Posterior cingulate gyrus (tissue), 11 donors: ENCODE measurements at regions of chr22 and their contacts with region 1.

Region 1: DNA sequence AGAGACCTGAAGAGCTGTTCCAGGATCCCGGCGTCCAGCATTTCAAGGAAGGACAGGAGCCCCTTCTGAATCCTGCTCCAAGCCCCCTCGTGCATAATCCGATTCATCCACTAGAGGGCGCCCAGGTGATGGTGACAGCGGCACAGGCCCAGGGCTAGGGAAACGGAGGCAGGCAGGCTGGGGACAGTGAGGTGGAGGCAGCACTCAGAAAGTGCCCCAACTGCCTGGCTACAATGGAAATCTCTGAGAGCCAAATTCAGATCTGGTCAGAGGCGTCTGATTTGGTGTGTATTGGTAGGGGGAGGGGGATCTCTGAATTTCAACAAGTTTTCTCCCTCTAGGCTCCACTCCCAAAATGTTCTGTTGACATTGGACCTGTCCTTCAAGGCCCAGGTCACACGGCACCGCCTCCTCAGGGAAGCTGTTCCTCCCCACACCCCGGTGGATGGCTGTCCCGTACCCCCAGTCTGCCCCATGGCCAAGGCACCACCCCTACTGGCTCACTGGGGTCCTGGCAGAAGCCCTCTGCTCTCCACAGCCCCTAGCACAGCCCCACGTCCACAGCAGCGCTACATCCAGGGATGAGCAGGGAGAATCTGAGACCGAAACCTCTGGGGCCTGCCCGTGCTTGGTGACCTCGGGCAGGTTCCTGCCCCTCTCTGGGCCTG is 142.9 kb downstream of the CRYBB2 start:
- DNase-seq: peak; percentile 25 to 94 (median 74)

Region 2: DNA sequence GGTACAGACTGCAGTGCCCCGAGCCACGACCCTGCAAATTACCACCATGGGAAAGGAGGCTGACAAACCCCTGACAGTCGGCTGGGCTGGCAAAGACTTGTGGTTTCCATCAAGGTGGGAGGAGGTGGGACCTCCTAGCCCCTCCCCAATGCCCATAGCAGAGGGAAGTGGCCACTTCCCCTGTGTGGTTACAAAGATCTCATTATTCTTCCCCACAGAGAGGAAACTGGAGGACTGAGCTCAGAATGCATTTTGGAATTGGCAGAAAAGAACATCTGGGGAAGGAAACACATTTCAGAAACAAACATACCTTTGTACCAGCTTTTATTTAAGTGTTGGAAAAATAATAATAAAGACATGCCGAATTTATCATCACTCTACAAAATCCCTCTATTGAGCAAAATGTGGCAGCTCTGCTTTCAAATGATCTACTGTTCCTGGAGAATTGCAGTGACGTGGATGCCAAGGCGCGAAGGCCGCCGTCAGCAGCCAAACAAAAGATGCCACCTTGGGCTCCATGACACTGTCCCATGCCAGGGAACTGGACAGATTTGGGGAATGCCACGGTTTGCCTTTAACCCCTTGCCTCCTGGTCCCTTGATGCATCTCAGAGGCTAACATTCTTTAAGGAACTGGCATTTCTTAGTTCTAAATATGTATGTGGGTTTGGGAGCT is 26.7 kb after region 1 on chr22:
- intact Hi-C with region 1: no loop called
- DNase-seq: peak in 1 of 10 donors; percentile 61

Region 3: DNA sequence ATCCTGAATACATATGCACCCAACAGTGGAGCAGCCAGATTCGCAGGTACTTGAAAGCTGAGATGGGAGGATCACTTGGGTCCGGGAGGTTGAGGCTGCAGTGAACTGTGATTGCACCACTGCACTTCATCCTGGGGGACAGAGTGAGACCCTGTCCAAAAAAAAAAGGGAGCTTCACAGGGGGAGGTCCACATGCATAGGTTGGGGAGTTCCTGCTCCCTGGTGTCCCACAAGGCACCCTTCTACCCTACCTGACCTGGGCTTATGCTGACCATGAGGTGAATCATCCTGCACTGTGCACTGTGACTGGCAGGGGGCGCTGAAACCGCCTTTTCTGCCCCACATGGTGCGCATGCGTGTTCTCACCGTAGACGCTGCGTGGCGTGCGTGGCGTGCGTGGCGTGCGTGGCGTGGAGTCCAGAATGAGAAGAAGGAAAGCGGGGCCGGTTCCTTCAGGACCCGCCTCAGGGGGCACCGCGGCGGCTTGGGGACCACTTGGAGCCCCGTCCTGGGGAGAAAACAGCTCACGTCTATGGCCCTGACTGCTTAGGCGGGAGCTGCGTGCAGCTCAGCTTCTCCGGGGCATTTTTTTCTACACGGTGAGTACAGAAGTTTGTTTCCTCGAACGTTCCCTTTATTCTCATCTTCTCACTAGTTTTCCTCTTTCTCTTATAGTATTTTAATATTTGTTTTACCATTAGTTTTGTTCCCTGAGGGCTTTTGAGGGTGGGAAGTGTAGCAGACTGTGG is 85.5 kb after region 1 on chr22:
- intact Hi-C with region 1: loop called (anchors 5 kb)
- DNase-seq: peak; percentile 78 to 98 (median 90)

Region 4: DNA sequence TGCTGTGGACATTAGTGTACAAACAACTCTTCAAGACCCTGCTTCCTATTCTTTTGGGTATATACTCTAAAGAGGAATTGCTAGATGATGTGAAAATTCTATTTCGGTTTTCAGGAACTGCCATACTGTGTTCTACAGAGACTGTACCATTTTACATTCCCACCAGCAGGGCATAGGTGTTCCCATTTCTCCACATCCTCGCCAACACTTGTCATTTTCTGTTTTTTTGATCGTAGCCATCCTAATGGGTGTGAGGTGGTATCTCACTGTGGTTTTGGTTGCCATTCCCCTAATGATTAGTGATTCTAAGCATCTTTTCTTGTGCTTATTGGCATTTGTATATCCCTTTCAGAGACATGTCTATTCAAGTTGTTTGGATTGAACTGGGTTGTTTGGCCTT is 172.4 kb after region 1 on chr22:
- intact Hi-C with region 1: no loop called
- DNase-seq: no peak

Region 5: GRCh38 chr22:25777870-25778269 is 415.5 kb after region 1 on chr22:
- intact Hi-C with region 1: loop called (anchors 10 kb)
- DNase-seq: peak in 2 of 10 donors; percentile 12 to 13